A673 (cell line): ENCODE measurements at regions of chr16 and their contacts with region 1.

Region 1: DNA sequence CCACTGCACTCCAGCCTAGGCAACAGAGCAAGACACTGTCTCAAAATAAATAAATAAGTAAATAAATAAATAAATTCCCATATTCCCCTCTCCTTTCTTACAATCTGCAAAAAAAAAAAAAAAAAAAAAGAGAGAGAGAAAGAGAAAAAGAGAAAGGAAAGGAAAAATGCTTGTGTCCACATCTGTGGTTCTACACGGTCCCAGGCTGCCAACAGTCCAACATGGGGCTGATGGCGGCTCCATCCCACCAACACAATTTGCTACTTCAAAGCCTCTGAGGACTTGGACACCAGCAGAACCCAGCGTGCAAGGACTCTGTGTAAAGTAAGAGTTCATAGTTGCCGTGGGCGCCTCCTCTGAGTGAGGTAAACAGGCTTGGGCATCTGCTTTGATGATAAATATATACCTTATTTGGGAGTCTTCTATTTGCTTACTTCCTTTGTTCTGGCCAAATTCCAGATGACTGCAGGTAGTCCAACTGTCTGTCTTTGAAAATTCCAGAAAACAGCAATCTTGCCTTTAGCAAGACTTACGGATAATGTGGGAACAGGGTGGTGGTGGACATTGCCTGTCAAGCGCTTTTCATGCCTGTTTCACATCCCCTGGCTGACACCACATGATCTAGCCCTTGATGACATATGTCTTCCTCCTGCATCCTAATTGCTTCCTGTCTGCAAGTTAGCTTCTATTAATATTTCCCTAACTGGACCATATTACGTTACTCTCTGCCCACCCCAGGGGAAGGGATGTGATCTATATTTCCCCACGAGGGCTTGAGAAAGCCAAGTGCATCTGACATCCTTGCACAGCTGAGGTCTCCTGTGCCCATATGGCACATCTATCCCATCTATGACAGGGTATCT is 10.1 kb downstream of the LITAF start:
- DNase-seq: no peak
- H3K4me3 ChIP-seq: no peak overlapping the region
- H3K27ac ChIP-seq: no peak overlapping the region
- H3K4me1 ChIP-seq: no peaks in the 10 kb centered on the region
- H3K27me3 ChIP-seq: no peaks in the 10 kb centered on the region
- CTCF ChIP-seq: no peak

Region 2: DNA sequence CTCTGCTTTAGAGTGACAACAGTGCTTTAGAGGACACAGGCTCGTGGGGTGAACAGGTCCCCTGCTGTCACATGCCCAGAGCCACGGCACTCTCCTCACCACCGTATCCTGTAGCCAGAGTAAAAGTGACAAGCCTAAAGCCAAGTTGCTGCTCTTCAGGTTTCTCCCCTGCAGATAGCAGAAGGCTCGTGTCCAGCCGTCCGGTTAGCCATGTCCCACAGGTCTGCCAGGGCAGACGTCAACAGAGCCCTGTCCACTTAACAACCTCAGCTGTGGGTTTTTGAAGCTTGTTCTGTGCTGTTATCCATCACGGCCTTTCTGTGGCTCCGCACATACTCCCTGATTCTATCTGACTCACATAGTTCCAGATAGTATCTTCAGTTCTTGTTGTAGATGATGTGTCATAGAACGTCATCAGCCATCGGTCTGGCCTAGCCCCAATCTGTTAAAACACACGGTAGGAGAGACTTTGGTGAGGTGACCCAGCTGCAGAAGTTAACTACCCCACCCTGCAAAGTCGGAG is 421.3 kb before region 1 on chr16:
- CTCF ChIA-PET with region 1: no interaction called
- POLR2A ChIA-PET with region 1: no interaction called
- intact Hi-C with region 1: no loop called
- DNase-seq: no peak
- H3K4me3 ChIP-seq: no peak overlapping the region
- H3K27ac ChIP-seq: no peak overlapping the region
- H3K4me1 ChIP-seq: peaks cover 26% of the 10 kb centered on the region
- H3K27me3 ChIP-seq: no peaks in the 10 kb centered on the region
- CTCF ChIP-seq: no peak

Region 3: DNA sequence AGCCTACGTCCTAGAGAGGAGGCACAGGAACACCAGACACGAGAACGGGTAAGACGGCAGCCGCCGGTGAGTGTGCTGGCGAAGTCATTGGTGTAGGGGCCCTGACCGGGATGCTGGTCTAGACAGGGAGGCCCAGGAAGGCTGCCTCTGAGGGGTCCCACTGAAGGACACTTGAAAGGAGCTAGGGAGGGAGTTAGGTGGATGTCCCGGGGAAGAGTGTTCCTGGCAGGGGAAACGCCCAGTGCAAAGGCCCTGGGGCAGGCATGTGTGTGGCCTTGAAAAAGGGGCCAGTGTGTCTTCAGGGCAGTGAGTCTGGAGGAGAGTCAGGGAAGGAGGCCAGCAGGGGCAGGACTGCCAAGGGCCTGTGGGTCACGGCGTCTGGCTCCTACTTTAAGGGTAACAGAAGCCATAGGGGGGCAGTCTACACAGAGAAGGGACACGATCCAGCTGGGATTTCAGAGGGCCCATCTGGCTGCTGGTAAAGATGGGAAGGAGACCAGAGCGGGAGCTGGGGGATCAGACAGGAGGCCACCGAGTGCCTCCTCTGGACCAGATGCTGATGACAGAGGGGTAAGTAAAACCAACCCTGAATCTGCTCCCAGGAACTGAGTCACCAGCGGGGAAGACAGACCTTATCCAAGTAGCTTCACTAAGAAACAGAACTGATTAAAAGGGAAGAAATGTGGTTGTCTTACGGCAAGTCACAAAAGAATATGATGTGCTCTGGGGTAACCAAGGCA is 105.8 kb before region 1 on chr16:
- CTCF ChIA-PET with region 1: no interaction called
- POLR2A ChIA-PET with region 1: interaction called, 11 read pairs
- intact Hi-C with region 1: no loop called
- DNase-seq: no peak
- H3K4me3 ChIP-seq: no peak overlapping the region
- H3K27ac ChIP-seq: no peak overlapping the region
- H3K4me1 ChIP-seq: no peaks in the 10 kb centered on the region
- H3K27me3 ChIP-seq: peaks cover 14% of the 10 kb centered on the region
- CTCF ChIP-seq: no peak

Region 4: GRCh38 chr16:11757671-11758545 is 181.2 kb after region 1 on chr16:
- CTCF ChIA-PET with region 1: no interaction called
- POLR2A ChIA-PET with region 1: no interaction called
- intact Hi-C with region 1: no loop called
- DNase-seq: no peak
- H3K4me3 ChIP-seq: no peak overlapping the region
- H3K27ac ChIP-seq: no peak overlapping the region
- H3K4me1 ChIP-seq: no peaks in the 10 kb centered on the region
- H3K27me3 ChIP-seq: no peaks in the 10 kb centered on the region
- CTCF ChIP-seq: no peak